ENCODE measurements at regions of chr18 and their contacts with region 1.

Region 1: DNA sequence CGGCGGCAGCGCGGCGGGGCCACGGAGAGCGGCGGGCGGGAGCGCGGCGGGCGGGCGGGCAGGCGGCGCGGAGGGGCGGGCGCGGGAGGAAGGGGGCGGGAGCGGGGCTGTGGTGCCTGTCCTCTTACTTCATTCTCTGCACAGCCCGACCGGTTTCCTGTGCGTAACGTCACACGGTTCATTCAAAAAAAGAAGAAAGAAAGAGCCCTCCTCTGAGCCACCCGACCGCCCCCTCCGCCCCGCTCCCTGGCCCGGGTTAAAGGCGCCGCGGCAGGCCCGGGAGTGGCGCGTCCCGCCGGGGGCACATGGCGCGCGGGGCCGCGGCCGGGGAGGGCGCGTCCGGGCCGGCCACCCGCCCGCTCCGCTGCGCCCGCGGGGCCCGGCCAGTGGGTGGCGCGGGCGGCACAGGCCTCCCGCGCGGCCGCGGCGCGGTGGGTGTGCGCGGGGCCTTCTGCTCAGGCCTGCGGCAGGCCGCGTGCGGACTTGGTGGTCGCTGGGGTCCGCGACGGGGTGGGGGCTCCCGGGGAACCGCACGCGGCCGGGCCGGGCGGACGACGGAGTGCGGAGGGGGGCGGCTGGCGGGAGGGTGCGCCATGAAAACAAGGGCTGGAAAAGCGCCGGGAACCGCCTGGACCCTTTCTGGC is 599 bp upstream of the BCL2 start:
- DNase-seq: peak; percentile 87
- H3K4me3 Mint-ChIP-seq: peak overlapping the region; percentile 92
- H3K27ac Mint-ChIP-seq: peak overlapping the region; percentile 67
- H3K4me1 Mint-ChIP-seq: peaks cover 26% of the 10 kb centered on the region
- H3K27me3 Mint-ChIP-seq: no peaks in the 10 kb centered on the region

Region 2: GRCh38 chr18:63131106-63131958 is 188.8 kb before region 1 on chr18:
- CTCF ChIA-PET with region 1: interaction called, 35 read pairs
- POLR2A ChIA-PET with region 1: interaction called, 10 read pairs
- DNase-seq: peak; percentile 59
- H3K4me3 Mint-ChIP-seq: no peak overlapping the region
- H3K27ac Mint-ChIP-seq: no peak overlapping the region
- H3K4me1 Mint-ChIP-seq: peaks cover 37% of the 10 kb centered on the region
- H3K27me3 Mint-ChIP-seq: no peaks in the 10 kb centered on the region

Region 3: GRCh38 chr18:63161761-63162195 is 158.4 kb before region 1 on chr18:
- CTCF ChIA-PET with region 1: interaction called, 51 read pairs
- POLR2A ChIA-PET with region 1: interaction called, 54 read pairs
- DNase-seq: peak; percentile 87
- H3K4me3 Mint-ChIP-seq: peak overlapping the region; percentile 76
- H3K27ac Mint-ChIP-seq: peak overlapping the region; percentile 95
- H3K4me1 Mint-ChIP-seq: peaks cover 90% of the 10 kb centered on the region
- H3K27me3 Mint-ChIP-seq: no peaks in the 10 kb centered on the region

Region 4: DNA sequence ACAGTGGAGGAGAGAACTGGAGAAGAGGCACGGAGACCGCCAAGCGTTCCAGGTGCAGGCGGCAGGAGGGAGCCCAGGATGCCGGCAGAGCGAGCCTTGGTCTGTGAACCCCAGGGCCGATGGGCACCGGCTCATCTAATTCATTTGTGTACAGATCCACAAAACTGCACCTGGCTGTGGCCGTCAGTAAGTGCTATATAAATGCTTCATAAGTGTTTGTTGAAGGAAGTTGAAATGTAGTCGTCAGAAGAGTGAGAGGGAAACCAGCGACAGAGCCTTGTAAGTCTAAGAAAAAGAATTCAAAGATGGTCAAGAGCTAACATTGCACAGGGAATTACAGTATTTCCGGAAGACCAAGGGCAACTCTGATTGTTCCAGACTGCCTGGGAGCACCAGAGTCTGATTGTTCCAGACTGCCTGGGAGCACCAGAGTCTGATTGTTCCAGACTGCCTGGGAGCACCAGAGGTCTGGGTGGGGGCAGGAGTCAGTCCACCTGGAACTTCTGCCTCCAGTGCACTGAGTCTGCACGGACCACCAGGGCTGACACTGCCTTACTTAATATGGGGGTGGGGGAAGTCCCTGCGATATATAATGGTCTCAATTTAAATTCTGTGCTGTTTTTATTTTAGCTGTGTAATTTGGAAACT is 112.9 kb before region 1 on chr18:
- CTCF ChIA-PET with region 1: interaction called, 30 read pairs
- POLR2A ChIA-PET with region 1: interaction called, 85 read pairs
- DNase-seq: no peak
- H3K4me3 Mint-ChIP-seq: peak overlapping the region; percentile 81
- H3K27ac Mint-ChIP-seq: peak overlapping the region; percentile 94
- H3K4me1 Mint-ChIP-seq: peaks cover 93% of the 10 kb centered on the region
- H3K27me3 Mint-ChIP-seq: no peaks in the 10 kb centered on the region

Region 5: DNA sequence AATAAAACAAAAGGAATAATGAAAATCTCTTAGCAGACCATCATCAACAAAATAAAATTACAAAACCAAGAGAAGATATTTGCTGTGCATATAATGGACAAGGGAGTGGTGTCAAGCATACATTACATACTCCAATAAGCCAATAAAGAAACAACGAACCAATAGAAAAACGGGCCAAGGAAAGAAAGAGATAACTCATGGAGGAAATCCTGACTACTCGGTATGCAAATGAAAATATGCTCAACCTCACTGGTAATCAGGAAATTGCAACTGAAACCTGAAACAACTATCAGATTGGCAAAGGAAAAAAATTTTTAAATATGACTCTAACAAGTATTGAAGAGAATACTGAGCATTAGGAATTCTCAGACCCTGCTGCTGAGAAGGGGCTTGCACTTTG is 85.3 kb before region 1 on chr18:
- CTCF ChIA-PET with region 1: interaction called, 12 read pairs
- POLR2A ChIA-PET with region 1: no interaction called
- DNase-seq: no peak
- H3K4me3 Mint-ChIP-seq: no peak overlapping the region
- H3K27ac Mint-ChIP-seq: peak overlapping the region; percentile 8
- H3K4me1 Mint-ChIP-seq: peaks cover 53% of the 10 kb centered on the region
- H3K27me3 Mint-ChIP-seq: no peaks in the 10 kb centered on the region

Region 6: DNA sequence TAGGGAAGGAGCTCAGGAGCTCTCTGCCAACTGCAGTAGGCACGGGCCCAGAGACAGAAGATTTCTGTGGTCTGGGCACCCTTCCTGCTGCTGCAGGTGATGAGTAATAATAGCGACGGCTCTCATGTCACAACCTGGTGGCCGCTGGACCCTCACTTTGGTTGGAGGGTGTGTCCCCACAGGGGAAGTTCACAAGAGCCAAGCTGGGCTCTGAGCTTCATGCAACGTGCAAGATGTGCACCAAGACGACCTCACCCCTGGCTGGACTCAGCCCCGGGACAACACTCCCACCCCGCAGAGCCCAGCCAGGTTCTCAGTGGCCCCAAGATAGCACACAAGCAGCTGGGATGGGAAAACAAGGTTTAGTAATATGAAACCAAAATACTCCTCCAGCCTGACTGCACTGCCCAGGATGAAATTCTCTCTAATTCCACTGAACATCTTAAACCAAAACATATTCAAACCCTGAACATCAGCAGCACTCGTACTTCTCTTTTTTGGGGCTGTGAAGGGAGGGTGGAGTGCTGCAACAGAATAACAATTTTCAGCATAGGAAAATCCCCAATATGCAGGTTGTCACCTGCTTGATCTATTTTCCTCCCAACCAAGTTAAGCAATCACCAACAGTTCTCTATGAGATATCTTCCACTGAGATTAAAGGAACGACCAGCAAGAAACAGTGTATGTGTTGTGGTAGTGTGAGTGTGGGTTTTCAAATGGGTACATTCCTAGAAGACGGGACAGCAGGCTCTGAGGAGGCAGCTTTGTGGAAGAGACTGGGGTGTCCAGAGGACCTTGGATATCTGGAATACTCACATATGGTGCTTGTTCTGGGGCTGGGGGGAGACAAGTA is 27.1 kb before region 1 on chr18:
- CTCF ChIA-PET with region 1: interaction called, 58 read pairs
- POLR2A ChIA-PET with region 1: interaction called, 112 read pairs
- DNase-seq: peak; percentile 62
- H3K4me3 Mint-ChIP-seq: peak overlapping the region; percentile 7
- H3K27ac Mint-ChIP-seq: peak overlapping the region; percentile 77
- H3K4me1 Mint-ChIP-seq: peaks cover 66% of the 10 kb centered on the region
- H3K27me3 Mint-ChIP-seq: no peaks in the 10 kb centered on the region

Region 7: DNA sequence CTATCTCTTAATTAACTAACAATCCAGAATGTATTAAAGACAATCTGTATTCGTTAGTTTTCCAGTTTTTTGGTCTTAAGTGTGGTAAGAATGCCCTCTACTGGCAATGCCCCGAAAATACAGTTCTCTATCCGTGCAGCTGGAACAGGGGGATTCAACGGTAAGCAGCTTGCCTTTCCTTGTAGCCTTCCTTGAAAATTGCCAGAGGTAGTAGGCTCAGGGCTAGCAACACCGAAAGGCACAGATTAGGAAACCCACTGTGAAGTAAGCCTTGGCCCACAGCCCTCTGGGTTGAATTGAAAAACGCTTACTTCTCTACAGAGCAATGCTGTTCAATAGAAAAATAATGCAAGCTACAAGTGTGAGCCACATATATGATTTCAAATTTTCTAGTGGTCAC is 119.2 kb after region 1 on chr18:
- CTCF ChIA-PET with region 1: interaction called, 18 read pairs
- POLR2A ChIA-PET with region 1: no interaction called
- DNase-seq: peak; percentile 48
- H3K4me3 Mint-ChIP-seq: no peak overlapping the region
- H3K27ac Mint-ChIP-seq: no peak overlapping the region
- H3K4me1 Mint-ChIP-seq: peaks cover 2% of the 10 kb centered on the region
- H3K27me3 Mint-ChIP-seq: peaks cover 26% of the 10 kb centered on the region

Measured in activated CD4-positive, alpha-beta memory T cell treated with anti-CD3 and anti-CD28 coated beads, Interleukin-2, amount 10 ng/mL, durations not matched to agents 7 days and 5 days (primary cell).